ENCODE measurements at regions of chr10 and their contacts with region 1.

Region 1: GRCh38 chr10:91908337-91909116 is 759 bp downstream of the FGFBP3 start:
- DNase-seq: peak; percentile 66
- H3K27ac ChIP-seq: peak overlapping the region; percentile 64
- CTCF ChIP-seq: peak; percentile 80

Region 2: GRCh38 chr10:91758303-91759146 is 150.0 kb before region 1 on chr10:
- CTCF ChIA-PET with region 1: interaction called, 11 read pairs
- POLR2A ChIA-PET with region 1: interaction called, 5 read pairs
- DNase-seq: peak; percentile 52
- H3K27ac ChIP-seq: no peak overlapping the region
- CTCF ChIP-seq: peak; percentile 73

Region 3: DNA sequence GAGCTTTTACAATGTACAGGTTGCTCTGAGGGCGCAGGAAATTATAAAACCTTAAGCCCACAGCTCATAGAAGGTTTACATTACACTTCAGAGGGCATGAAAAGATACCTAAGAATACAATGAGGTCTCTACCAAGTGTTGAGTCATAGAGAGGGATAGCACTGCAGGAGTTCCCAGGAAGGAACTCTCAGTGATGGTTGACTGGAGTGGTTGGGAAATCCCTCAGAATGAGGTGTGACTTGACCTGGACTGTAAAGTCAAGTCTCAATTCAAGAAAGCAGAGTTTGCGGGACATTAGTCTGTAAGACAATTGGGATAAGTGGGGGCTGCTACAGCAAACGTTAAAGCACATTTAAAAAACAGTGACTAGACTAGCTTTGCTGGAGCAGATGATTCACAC is 88.4 kb before region 1 on chr10:
- CTCF ChIA-PET with region 1: no interaction called
- POLR2A ChIA-PET with region 1: no interaction called
- DNase-seq: no peak
- H3K27ac ChIP-seq: no peak overlapping the region
- CTCF ChIP-seq: no peak

Region 4: DNA sequence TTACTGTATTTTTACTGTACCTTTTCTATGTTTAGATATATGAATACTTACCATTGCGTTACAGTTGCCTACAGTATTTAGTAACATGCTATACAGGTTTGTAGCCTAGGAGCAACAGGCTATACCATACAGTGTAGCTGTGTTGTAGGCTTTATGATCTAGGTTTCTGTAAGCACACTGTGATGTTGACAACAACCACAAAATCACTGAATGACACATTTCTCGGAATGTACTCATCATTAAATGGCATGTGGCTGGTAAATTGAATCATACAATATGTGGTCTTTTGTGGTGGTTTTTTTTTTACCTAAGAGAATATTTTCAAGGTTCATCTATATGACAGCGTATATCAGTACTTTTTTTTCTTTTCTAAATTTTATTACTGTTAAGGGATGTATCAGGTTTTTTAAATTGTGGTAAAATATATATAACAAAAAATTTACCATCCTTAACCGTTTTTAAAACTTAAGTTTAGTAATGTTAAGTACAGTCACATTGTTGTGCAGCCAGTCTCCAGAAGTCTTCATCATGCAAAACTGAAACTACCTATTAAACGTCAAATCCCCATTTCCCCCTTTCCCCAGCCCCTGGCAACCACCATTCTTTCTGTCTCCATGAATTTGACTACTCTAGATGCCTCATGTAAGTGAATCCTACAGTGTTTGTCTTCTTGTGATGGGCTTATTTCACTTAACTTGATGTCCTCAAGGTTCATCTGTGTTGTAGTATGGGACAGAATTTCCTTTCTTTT is 36.5 kb after region 1 on chr10:
- CTCF ChIA-PET with region 1: interaction called, 13 read pairs
- POLR2A ChIA-PET with region 1: no interaction called
- DNase-seq: no peak
- H3K27ac ChIP-seq: no peak overlapping the region
- CTCF ChIP-seq: no peak